Activated T-helper 1 cell treated with anti-CD3 and anti-CD28 coated beads, Interleukin-12 subunit alpha, Interleukin-12 subunit beta, Interleukin-2, Interleukin-4 antibody, amounts not matched to agents 30 ng/mL and 10 ng/mL and 1 ng/mL, durations not matched to agents 14 hours and 24 hours and 36 hours (primary cell): ENCODE measurements at regions of chr2 and their contacts with region 1.

Region 1: GRCh38 chr2:86195055-86195807 is at the start of gene IMMT:
- DNase-seq: peak; percentile 93
- H3K4me3 Mint-ChIP-seq: peak within 1 kb of the TSS; percentile 99
- H3K27ac Mint-ChIP-seq: peak within 1 kb of the TSS; percentile 93
- H3K4me1 Mint-ChIP-seq: peaks cover 45% of the 10 kb centered on the region
- H3K27me3 Mint-ChIP-seq: no peaks in the 10 kb centered on the region
- total RNA-seq, gene IMMT: 164 and 166 TPM in 2 replicates

Region 2: GRCh38 chr2:85327822-85328617 is 867.2 kb before region 1 on chr2 and contains the start of gene TGOLN2:
- intact Hi-C with region 1: loop called (anchors 5 kb)
- DNase-seq: peak; percentile 92
- H3K4me3 Mint-ChIP-seq: peak within 1 kb of the TSS; percentile 95
- H3K27ac Mint-ChIP-seq: peak within 1 kb of the TSS; percentile 99
- H3K4me1 Mint-ChIP-seq: peaks cover 34% of the 10 kb centered on the region
- H3K27me3 Mint-ChIP-seq: no peaks in the 10 kb centered on the region
- total RNA-seq, gene TGOLN2: 102 and 104 TPM in 2 replicates

Region 3: DNA sequence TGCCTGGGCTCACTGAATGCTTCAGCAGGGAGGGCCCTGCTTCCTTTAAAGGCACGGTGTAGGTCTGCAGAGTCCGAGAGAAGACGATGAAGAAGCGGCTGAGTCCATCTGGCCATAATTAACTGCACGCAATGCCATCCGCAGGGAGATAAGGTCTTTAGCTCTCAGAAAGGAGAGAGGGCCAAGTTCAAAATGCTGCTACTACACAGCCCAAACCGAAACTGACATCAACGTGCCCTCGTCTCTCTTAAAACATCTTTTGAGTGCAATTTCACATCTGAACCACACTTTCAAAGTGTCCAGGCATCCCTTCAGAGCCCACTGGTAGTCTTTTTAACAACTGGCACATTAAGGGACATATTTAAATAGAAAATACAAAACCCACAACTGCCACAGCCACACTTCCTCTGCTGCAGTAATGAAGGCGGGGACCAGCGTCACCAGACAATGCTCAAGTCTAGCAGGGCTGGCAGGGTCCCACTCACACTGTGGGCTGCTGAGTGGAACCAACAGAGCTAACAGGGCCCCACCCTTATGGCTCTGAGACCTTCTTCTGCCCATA is 342.2 kb before region 1 on chr2:
- intact Hi-C with region 1: loop called (anchors 5 kb)
- DNase-seq: peak; percentile 46
- H3K4me3 Mint-ChIP-seq: peak overlapping the region; percentile 82
- H3K27ac Mint-ChIP-seq: peak overlapping the region; percentile 99
- H3K4me1 Mint-ChIP-seq: peaks cover 58% of the 10 kb centered on the region
- H3K27me3 Mint-ChIP-seq: no peaks in the 10 kb centered on the region

Region 4: DNA sequence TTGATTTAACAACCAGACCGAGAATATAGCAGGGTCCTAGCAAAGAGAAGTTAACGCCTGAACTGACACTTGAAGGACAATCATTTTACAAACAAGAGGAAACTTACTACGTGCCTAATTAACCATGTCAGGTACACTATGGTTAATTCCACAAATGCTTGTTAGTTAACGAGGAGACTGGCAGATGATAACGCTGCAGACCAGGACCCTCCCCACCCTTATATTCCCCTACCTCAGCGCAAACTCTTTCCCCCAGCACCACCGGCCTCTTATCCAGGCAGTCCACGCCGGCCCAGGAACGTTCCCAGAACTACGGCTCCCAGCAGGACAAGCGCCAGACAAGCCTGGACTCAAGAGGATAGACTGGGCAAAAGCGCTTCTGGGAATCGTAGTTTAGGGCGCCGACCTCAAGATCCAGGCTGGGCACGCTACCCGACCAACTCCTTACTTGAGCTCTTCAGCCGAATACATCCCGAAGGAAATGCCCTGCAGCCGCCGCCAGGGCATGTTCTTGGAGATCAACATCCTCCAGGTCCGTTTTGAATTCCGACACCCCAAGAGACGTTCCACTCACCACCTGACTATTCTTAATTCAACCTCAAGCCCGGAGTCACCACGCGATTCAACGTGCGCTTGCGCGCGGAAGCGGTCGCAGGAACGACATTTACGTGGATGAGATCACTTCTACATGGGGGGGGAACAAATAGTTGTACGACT is 89.8 kb before region 1 on chr2 and contains the start of gene POLR1A:
- intact Hi-C with region 1: loop called (anchors 1 kb)
- DNase-seq: peak; percentile 84
- H3K4me3 Mint-ChIP-seq: peak within 1 kb of the TSS; percentile 91
- H3K27ac Mint-ChIP-seq: peak within 1 kb of the TSS; percentile 99
- H3K4me1 Mint-ChIP-seq: peaks cover 55% of the 10 kb centered on the region
- H3K27me3 Mint-ChIP-seq: no peaks in the 10 kb centered on the region
- total RNA-seq, gene POLR1A: 69.7 and 74.6 TPM in 2 replicates

Region 5: GRCh38 chr2:86440631-86441391 is 245.6 kb after region 1 on chr2 and contains the start of gene KDM3A:
- intact Hi-C with region 1: loop called (anchors 1 kb)
- DNase-seq: peak; percentile 99
- H3K4me3 Mint-ChIP-seq: peak within 1 kb of the TSS; percentile 96
- H3K27ac Mint-ChIP-seq: peak within 1 kb of the TSS; percentile 98
- H3K4me1 Mint-ChIP-seq: peaks cover 50% of the 10 kb centered on the region
- H3K27me3 Mint-ChIP-seq: peaks cover 11% of the 10 kb centered on the region
- total RNA-seq, gene KDM3A: 61.6 and 67.3 TPM in 2 replicates

Region 6: GRCh38 chr2:86623651-86624541 is 428.7 kb after region 1 on chr2 and contains the start of gene RNF103:
- intact Hi-C with region 1: loop called (anchors 1 kb)
- DNase-seq: peak; percentile 92
- H3K4me3 Mint-ChIP-seq: peak within 1 kb of the TSS; percentile 93
- H3K27ac Mint-ChIP-seq: peak within 1 kb of the TSS; percentile 95
- H3K4me1 Mint-ChIP-seq: peaks cover 40% of the 10 kb centered on the region
- H3K27me3 Mint-ChIP-seq: peaks cover 24% of the 10 kb centered on the region
- total RNA-seq, gene RNF103: 13.6 and 14.3 TPM in 2 replicates